GM12878 (cell line): ENCODE measurements at regions of chr5 and their contacts with region 1.

Region 1: GRCh38 chr5:95973793-95974325 is 12.2 kb upstream of the ELL2 start:
- DNase-seq: peak; percentile 87
- ATAC-seq: peak; percentile 99
- H3K4me3 ChIP-seq: no peak overlapping the region
- H3K27ac ChIP-seq: no peak overlapping the region; the same call in 1 of the 2 replicates
- H3K4me1 ChIP-seq: peaks cover 10% of the 10 kb centered on the region
- H3K27me3 ChIP-seq: no peaks in the 10 kb centered on the region
- CTCF ChIP-seq: no peak
- EP300 ChIP-seq: peak; percentile 52 to 71; a peak in 3 of 4 replicates
- POLR2A ChIP-seq: no peak
- RAD21 ChIP-seq: no peak

Region 2: DNA sequence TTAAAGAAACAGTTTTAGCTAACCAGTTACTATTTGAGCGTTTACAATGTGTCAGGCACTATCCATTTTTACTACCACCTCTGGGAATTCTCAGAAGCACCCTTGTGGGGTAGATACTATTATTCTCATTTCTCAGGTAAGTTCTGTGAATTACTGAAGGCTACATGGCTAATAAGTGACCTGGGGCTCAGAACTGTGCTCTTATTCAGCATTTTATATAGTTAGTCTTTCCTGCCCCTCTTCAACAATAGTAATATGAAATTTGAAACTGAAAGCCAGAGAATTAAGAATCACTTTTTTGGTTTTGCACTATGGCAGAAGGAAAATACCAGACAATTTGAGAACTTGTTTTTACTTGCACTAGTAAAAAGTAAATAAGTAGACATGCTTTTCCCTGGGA is 24.0 kb before region 1 on chr5:
- CTCF ChIA-PET with region 1: interaction called, 4 read pairs
- POLR2A ChIA-PET with region 1: interaction called, 11 read pairs
- RAD21 ChIA-PET with region 1: interaction called, 13 read pairs
- SMC1A ChIA-PET with region 1: interaction called, 21 read pairs
- in situ Hi-C with region 1: no loop called
- intact Hi-C with region 1: no loop called
- DNase-seq: no peak
- ATAC-seq: peak; percentile 68
- H3K4me3 ChIP-seq: peak overlapping the region; percentile 15; the same call in 1 of the 2 replicates
- H3K27ac ChIP-seq: peak overlapping the region; percentile 67
- H3K4me1 ChIP-seq: peaks cover 18% of the 10 kb centered on the region; the same call in 1 of the 2 replicates
- H3K27me3 ChIP-seq: no peaks in the 10 kb centered on the region
- CTCF ChIP-seq: no peak
- EP300 ChIP-seq: no peak
- POLR2A ChIP-seq: no peak
- RAD21 ChIP-seq: no peak

Region 3: DNA sequence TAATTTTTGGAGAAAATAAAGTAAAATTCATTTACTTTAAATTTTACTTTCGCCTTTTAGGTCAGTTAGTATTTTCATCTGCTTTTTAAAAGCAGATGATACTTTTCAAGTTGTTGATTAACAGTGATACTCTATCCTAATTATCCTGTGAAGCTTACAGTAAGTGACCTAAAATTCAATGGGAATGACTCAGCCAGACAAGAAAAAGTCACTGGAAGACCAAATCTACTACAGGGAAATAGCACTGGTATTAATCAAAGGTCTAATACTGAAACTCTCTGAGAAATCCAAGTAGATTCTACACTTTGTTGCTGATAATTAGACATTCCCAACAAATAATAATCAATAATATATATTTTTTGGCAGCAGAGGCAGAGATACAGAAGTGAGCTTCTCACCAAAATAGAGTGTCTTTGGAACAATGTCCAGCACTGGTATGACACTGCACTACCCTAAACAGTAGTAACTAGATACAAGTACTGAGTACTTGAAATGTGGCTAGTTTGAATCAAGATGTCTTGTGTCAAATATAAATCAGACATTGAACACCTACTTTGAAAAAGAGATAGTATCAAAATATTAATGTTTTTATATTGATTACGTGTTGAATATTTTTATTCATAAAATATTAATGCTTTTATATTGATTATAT is 10.6 kb after region 1 on chr5:
- CTCF ChIA-PET with region 1: interaction called, 5 read pairs
- POLR2A ChIA-PET with region 1: interaction called, 3 read pairs
- RAD21 ChIA-PET with region 1: interaction called, 12 read pairs
- SMC1A ChIA-PET with region 1: interaction called, 59 read pairs
- in situ Hi-C with region 1: no loop called
- intact Hi-C with region 1: no loop called
- DNase-seq: no peak
- ATAC-seq: no peak
- H3K4me3 ChIP-seq: no peak overlapping the region
- H3K27ac ChIP-seq: no peak overlapping the region
- H3K4me1 ChIP-seq: no peaks in the 10 kb centered on the region
- H3K27me3 ChIP-seq: no peaks in the 10 kb centered on the region
- CTCF ChIP-seq: no peak
- EP300 ChIP-seq: no peak
- POLR2A ChIP-seq: no peak
- RAD21 ChIP-seq: no peak